Thyroid gland (tissue), 4 donors: ENCODE measurements at regions of chr3 and their contacts with region 1.

Region 1: DNA sequence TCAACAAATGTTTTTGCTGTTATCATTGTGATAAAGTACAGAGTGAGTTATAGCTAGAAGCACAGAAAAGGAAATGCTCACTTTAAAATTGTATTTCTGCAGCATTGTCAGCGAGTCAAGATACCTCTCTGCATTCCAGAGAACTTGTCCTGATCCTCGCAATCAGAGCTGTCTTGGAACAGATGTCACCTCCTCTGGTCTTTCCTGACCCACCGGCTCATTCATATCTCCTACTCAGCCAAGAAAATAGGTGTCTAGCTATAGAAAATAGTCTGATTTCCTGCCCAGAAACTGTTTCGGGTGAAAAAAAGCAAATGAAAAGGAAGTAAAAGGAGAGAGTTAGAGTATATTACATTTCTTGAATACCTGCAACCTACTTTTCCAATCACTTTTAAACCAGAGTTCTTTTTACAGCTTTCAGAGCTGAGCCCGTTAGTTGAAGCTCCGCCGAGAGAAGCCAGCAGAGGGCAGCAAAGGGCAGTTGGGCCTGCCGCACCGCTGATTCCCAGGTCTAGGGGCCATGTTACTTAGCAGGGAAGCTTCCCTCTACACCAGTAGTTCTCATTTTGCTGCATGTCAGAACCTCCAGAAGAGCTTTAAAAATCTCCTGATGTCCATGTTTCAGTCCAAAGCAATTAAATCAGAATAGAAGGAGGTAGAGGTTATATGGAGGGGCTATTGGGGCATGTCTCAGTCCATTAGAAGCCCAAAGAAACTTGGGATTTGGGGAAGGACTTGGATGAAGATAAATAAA is 185.7 kb upstream of the THRB start:
- DNase-seq: peak; percentile 62 to 75
- H3K4me3 ChIP-seq: no peak overlapping the region
- H3K27ac ChIP-seq: no peak overlapping the region
- H3K4me1 ChIP-seq: no peaks in the 10 kb centered on the region
- H3K27me3 ChIP-seq: no peaks in the 10 kb centered on the region
- CTCF ChIP-seq: peak; percentile 50 to 92 (median 60)
- POLR2A ChIP-seq: no peak

Region 2: GRCh38 chr3:23999012-23999641 is 681.3 kb before region 1 on chr3:
- intact Hi-C with region 1: loop called (anchors 10 kb)
- DNase-seq: peak; percentile 74 to 80
- H3K4me3 ChIP-seq: no peak overlapping the region
- H3K27ac ChIP-seq: no peak overlapping the region
- H3K4me1 ChIP-seq: peaks cover 0 to 6% of the 10 kb centered on the region in 2 donors
- H3K27me3 ChIP-seq: no peaks in the 10 kb centered on the region
- CTCF ChIP-seq: peak; percentile 65 to 99 (median 94)
- POLR2A ChIP-seq: no peak